Esophagus muscularis mucosa (tissue), 4 donors: ENCODE measurements at regions of chr18 and their contacts with region 1.

Region 1: GRCh38 chr18:48529796-48530195 is 9.0 kb upstream of the CTIF start:
- DNase-seq: no peak
- H3K4me3 ChIP-seq: no peak overlapping the region
- H3K27ac ChIP-seq: no peak overlapping the region
- H3K4me1 ChIP-seq: peaks cover 0 to 12% (median 0%) of the 10 kb centered on the region in 4 donors
- H3K27me3 ChIP-seq: no peaks in the 10 kb centered on the region
- CTCF ChIP-seq: no peak
- EP300 ChIP-seq: no peak
- POLR2A ChIP-seq: no peak

Region 2: GRCh38 chr18:48428475-48429177 is 101.2 kb before region 1 on chr18:
- intact Hi-C with region 1: no loop called
- DNase-seq: no peak
- H3K4me3 ChIP-seq: no peak overlapping the region
- H3K27ac ChIP-seq: no peak overlapping the region
- H3K4me1 ChIP-seq: no peaks in the 10 kb centered on the region
- H3K27me3 ChIP-seq: peaks cover 0 to 13% (median 0%) of the 10 kb centered on the region in 4 donors
- CTCF ChIP-seq: no peak
- EP300 ChIP-seq: no peak
- POLR2A ChIP-seq: no peak

Region 3: DNA sequence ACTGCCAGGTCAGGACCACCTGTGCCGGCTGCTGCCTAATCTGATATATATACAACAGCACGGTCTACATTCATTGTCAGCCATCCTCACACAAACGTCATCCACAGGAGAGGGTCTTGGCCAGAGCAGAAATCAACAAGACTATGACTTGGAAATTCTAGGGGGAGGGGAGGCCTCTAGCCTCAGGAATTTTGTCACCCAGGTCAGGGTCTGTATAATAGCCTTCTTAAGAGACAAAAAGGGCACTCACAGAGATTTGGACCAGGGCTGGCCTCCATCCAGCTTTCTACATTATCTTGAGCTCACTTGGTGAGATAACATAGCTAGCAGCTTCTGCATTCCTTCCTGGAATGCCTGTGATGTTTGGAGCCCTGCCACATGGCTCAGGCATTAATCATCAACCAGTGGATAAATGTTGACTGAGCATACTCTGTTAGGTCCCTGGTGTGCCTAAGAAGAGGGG is 41.4 kb before region 1 on chr18:
- intact Hi-C with region 1: loop called (anchors 5 kb)
- DNase-seq: no peak
- H3K4me3 ChIP-seq: no peak overlapping the region
- H3K27ac ChIP-seq: no peak overlapping the region
- H3K4me1 ChIP-seq: peaks cover 4 to 15% (median 12%) of the 10 kb centered on the region in 4 donors
- H3K27me3 ChIP-seq: no peaks in the 10 kb centered on the region
- CTCF ChIP-seq: no peak
- EP300 ChIP-seq: no peak
- POLR2A ChIP-seq: no peak